ENCODE measurements at regions of chr4 and their contacts with region 1.

Region 1: GRCh38 chr4:40976343-40976742 is 226.6 kb downstream of the NSUN7 start:
- DNase-seq: peak; percentile 26
- ATAC-seq: peak; percentile 55
- H3K4me3 Mint-ChIP-seq: no peak overlapping the region
- H3K27ac Mint-ChIP-seq: no peak overlapping the region
- H3K4me1 Mint-ChIP-seq: 0 out of 2 replicates have a peak, but pooled peaks cover 2% of the 10 kb centered on the region
- H3K27me3 Mint-ChIP-seq: no peaks in the 10 kb centered on the region
- CTCF ChIP-seq: peak; percentile 56; the same call in 1 of the 2 replicates

Region 2: GRCh38 chr4:40953283-40954087 is 22.9 kb before region 1 on chr4:
- CTCF ChIA-PET with region 1: no interaction called
- POLR2A ChIA-PET with region 1: no interaction called
- DNase-seq: no peak
- ATAC-seq: peak; percentile 46; the same call in 1 of the 2 replicates
- H3K4me3 Mint-ChIP-seq: no peak overlapping the region
- H3K27ac Mint-ChIP-seq: peak overlapping the region; percentile 65
- H3K4me1 Mint-ChIP-seq: peaks cover 24% of the 10 kb centered on the region
- H3K27me3 Mint-ChIP-seq: no peaks in the 10 kb centered on the region
- CTCF ChIP-seq: no peak

Region 3: DNA sequence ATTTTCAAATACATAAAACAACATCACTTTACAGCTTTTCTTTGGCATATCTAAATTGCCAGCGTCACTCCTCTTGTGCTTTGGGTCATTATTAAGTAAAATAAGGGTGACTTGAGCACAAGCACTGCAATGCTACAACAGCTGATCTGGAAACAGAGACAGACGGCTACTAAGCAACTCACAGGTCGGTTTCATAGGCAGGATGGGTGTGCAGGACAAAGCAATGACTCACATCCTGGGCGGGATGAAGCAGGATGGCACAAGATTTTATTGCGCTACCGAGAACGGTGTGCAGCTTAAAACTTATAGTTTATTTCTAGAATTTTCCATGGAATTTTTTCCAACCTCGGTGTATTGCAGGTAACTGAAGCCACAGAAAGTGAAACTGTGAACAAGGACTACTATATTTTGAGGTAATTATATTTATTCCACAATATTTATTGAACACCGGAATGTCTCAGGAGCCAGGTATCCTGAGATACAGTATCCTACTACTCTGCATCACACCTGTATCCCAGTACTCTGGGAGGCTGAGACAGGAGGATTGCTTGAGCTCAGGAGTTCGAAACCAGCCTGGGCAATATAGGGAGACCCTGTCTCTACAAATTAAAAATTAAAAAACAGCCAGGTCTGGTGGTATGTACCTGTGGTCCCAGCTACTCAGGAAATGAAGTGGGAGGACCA is 22.5 kb after region 1 on chr4:
- CTCF ChIA-PET with region 1: interaction called, 10 read pairs
- POLR2A ChIA-PET with region 1: no interaction called
- DNase-seq: no peak
- ATAC-seq: peak; percentile 34; the same call in 1 of the 2 replicates
- H3K4me3 Mint-ChIP-seq: no peak overlapping the region
- H3K27ac Mint-ChIP-seq: no peak overlapping the region; the same call in 1 of the 2 replicates
- H3K4me1 Mint-ChIP-seq: peaks cover 27% of the 10 kb centered on the region
- H3K27me3 Mint-ChIP-seq: no peaks in the 10 kb centered on the region
- CTCF ChIP-seq: no peak

Region 4: GRCh38 chr4:41214136-41214824 is 237.9 kb after region 1 on chr4 and contains the start of gene APBB2:
- CTCF ChIA-PET with region 1: interaction called, 104 read pairs
- POLR2A ChIA-PET with region 1: interaction called, 4 read pairs
- DNase-seq: peak; percentile 96
- ATAC-seq: peak; percentile 80
- H3K4me3 Mint-ChIP-seq: peak within 1 kb of the TSS; percentile 83
- H3K27ac Mint-ChIP-seq: no peak within 1 kb of the TSS
- H3K4me1 Mint-ChIP-seq: peaks cover 46% of the 10 kb centered on the region
- H3K27me3 Mint-ChIP-seq: peaks cover 13% of the 10 kb centered on the region
- CTCF ChIP-seq: peak; percentile 80
- total RNA-seq, gene APBB2: 43.2 to 49.0 TPM (median 48.5 TPM) in 3 replicates

Region 5: GRCh38 chr4:41232406-41232805 is 256.1 kb after region 1 on chr4:
- CTCF ChIA-PET with region 1: interaction called, 12 read pairs
- POLR2A ChIA-PET with region 1: no interaction called
- DNase-seq: no peak
- ATAC-seq: peak; percentile 86
- H3K4me3 Mint-ChIP-seq: no peak overlapping the region
- H3K27ac Mint-ChIP-seq: no peak overlapping the region
- H3K4me1 Mint-ChIP-seq: no peaks in the 10 kb centered on the region
- H3K27me3 Mint-ChIP-seq: no peaks in the 10 kb centered on the region; the same call in 1 of the 2 replicates
- CTCF ChIP-seq: no peak